ENCODE measurements at regions of chr1 and their contacts with region 1.

Region 1: DNA sequence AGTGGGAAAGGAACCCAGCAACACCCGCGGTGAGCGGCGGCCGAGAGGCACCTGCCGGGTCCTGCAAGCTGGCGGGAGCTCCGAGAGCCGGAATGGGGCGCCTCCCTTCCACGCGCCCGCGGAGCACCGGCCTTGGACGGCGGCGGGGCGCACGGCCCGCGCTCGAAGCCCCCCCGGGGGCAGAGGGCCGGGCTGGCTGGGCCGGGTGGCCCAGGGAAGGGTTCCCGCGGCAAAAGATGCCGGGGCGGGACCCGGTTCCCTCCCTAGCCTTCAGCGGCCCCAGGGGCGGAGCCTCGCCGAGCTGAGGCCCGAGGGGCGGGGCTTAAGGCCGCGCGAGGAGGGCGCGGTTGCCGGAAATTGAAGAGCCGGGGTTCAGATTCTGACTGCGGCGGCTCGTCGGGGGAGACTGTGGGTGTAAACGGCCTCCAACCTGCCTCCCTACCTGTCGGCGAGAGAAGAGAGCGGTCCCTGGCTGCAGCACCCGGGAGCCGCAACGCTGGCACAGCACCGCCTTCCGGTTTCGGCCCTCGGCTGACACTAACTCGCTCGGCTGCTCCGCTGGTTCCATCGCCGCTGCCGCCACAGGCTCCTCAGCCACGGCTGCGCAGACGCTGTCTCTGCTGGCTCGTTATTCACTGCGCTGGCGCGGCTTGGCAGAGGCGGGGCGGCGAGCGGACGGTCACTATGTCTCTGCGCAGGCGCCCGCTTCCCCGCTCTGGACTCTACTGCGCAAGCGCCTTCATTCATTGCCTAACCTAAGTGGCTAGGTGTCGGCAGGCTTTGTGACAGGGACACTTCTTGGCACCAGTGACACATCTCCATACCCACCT is at the start of gene RABIF:
- DNase-seq: peak; percentile 95
- H3K4me3 Mint-ChIP-seq: peak within 1 kb of the TSS; percentile 96
- H3K27ac Mint-ChIP-seq: peak within 1 kb of the TSS; percentile 98
- H3K4me1 Mint-ChIP-seq: peaks cover 25% of the 10 kb centered on the region
- H3K27me3 Mint-ChIP-seq: no peaks in the 10 kb centered on the region
- total RNA-seq, gene RABIF: 11.8 and 13.4 TPM in 2 replicates

Region 2: DNA sequence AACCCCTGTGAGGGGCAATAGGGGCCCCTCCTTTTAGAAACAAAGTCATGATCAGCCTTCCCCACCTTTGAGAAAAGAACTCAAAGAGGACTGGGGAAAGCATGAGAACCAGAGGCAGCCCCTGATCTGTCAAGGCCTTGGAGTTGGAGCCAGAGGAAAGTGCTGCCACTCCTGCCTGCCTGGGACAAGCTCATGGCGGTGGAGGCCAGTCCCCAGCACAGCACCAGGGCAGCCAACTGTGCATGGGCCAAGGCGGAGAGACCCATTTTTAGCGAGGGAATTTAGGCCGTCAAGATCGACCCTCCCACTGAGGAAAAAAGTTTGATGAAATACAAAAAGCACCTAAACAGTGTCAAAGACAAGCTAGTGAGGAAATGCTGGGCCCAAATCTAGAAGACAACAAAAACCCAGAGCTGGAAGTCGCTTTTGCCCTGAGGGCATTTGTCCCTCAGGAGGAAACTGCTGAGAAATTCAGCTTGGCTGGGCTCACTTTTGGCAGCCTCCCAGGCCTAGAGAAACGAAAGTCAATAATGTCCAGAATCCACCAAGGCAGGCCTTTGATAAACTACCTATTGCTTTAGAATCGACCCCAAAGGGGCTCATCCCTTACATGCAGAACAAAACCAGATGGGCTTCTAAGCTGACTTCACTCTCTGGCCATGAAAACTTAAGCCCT is 217.5 kb before region 1 on chr1:
- intact Hi-C with region 1: no loop called
- DNase-seq: no peak
- H3K4me3 Mint-ChIP-seq: no peak overlapping the region
- H3K27ac Mint-ChIP-seq: no peak overlapping the region
- H3K4me1 Mint-ChIP-seq: no peaks in the 10 kb centered on the region
- H3K27me3 Mint-ChIP-seq: peaks cover 8% of the 10 kb centered on the region

Region 3: DNA sequence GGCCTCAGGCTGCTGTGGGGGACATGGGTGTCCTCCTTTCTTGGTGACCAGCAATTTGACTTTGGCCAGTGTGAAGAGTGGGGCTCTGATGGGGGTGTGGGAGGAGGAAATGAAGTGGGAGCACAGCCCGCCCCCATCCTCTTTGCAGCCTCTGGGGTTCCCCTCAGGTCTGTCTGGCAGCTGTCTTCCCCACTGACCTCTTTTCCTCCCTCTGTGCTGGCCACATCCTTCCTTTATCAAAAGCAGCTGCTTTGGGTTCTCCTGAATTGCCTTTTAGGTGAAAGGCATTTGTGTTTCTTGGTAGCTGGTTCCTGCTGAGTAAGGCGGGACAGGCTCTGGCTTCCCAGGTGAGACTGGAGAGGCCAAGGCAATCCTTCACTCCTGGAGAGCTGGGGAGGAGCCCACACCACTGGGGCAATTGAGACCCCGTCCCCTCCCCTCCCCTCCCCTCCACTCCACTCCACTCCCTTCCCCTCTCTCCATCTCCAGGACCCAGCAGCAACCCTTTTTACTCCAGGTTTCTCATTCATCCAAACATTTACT is 53.1 kb before region 1 on chr1:
- intact Hi-C with region 1: loop called (anchors 2 kb)
- DNase-seq: peak; percentile 53
- H3K4me3 Mint-ChIP-seq: peak overlapping the region; percentile 63
- H3K27ac Mint-ChIP-seq: peak overlapping the region; percentile 82
- H3K4me1 Mint-ChIP-seq: peaks cover 71% of the 10 kb centered on the region
- H3K27me3 Mint-ChIP-seq: no peaks in the 10 kb centered on the region

Region 4: DNA sequence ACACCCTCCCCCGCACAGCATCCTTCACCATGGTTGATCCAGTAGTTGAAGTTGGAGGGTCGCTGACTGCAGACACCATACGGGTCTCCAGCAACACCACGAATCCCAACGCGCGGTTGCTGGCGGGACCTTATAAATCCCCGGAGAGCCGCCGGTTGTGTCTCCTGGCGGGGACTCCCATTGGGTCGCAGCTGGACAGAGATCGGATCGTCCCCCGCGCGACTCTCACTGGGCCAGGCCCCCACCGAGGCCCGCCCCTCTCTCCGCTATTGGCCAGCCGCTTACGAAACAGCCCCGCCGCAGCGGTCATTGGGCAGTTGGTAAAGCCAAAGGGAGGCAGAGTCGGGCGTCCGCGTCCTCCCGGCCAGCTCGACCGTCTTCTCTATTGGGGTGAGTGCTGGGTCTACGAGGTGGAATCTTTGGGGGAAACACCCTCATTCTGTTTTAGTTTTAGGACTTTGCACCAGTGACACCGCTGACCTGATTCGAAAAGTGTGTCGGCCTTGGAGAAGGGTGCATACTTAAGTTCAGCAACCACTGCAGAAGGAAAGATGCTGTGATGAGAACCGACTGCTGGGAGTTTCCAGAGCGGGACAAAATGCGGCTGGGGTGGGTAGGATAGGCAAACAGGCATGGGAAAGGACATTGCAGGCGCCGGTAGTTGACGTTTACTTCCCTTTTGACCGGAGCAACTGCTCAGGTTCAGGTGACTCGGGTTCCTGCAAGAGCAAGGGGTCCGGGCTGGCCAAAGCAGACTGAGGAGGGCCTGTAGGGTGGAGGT is 27.1 kb before region 1 on chr1:
- intact Hi-C with region 1: loop called (anchors 1 kb)
- DNase-seq: peak; percentile 60
- H3K4me3 Mint-ChIP-seq: peak overlapping the region; percentile 87
- H3K27ac Mint-ChIP-seq: no peak overlapping the region
- H3K4me1 Mint-ChIP-seq: peaks cover 21% of the 10 kb centered on the region
- H3K27me3 Mint-ChIP-seq: peaks cover 65% of the 10 kb centered on the region

Region 5: DNA sequence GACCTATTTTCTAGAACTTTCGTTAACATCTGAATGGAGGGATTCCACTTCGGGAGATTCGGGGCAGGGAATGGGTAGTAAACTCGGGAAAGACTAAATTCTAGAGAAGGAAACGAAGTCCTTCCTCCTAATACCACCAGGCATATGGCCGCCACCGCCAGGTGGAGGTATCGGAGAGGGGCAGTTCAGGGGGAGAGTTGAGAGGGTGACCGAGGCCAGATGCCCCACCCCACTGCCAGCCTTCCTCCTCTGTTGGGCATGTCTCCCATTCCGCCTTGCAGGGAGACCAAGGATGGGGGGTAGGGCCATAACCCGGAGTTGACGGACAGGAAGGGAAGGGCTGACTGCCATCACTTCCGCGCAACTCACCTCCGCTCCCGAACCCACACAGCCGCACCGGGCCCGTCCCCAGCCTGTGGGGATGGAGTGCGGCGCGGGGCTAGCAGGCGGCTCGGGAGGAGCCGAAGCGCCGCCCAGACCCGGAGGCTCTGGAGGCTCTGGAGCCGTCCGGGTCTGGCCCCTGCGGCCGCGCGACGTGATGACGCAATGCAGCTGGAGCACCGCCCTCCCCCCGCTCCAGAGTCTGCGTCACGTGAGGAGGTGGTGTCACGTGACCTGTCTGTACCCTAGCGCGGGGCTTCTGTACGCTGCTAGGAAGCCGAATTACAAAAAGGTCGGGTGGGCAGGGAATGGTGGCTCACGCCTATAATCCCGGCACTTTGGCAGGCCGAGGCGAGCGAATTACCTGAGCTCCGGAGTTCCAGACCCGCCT is 38.2 kb after region 1 on chr1 and contains the start of gene KLHL12:
- intact Hi-C with region 1: loop called (anchors 1 kb)
- DNase-seq: peak; percentile 92
- H3K4me3 Mint-ChIP-seq: peak within 1 kb of the TSS; percentile 97
- H3K27ac Mint-ChIP-seq: peak within 1 kb of the TSS; percentile 95
- H3K4me1 Mint-ChIP-seq: peaks cover 34% of the 10 kb centered on the region
- H3K27me3 Mint-ChIP-seq: peaks cover 3% of the 10 kb centered on the region
- total RNA-seq, gene KLHL12: 24.9 and 25.5 TPM in 2 replicates

Region 6: DNA sequence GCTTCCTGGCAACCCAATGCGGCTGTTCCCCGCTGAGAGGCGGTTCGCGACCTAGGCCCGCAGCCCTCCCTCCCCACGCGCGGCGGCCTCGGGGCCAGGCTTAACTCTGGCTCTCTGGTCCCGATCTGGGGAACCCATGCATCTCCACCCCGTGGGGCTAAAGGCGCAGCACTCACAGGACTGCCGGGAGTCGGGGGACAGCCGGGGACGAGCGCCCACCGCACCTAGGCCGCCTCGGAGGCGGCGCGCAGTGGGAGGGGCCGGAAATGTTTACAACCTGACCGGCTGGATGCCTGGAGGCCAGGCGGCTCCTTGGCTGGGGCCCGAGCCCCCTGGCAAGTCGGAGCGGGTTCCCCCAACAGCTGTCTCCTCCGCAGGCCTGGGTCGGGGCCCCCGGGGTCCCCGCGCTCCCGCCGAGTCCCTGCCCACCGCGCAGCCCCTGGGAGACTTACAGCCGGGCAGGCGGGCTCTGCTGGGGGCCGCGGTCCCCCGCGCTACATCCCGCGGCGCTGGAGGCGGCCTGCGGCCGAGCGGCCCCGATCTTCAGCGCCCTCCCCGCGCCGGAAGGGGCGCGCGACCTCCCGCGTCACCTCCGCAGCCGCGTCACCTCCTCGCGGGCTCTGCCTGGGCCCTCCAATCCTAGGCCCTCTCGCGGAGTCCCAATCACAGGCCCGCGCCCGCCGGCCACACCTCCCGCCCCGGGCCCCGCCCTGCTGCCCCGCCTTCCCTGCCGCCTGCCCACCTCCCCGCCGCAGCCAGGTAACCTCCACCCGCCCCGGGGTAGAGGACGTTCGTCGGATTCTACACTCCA is 69.2 kb after region 1 on chr1 and contains the start of gene ADIPOR1:
- intact Hi-C with region 1: loop called (anchors 1 kb)
- DNase-seq: peak; percentile 92
- H3K4me3 Mint-ChIP-seq: peak within 1 kb of the TSS; percentile 89
- H3K27ac Mint-ChIP-seq: peak within 1 kb of the TSS; percentile 80
- H3K4me1 Mint-ChIP-seq: peaks cover 46% of the 10 kb centered on the region
- H3K27me3 Mint-ChIP-seq: peaks cover 2% of the 10 kb centered on the region
- total RNA-seq, gene ADIPOR1: 88.7 and 93.3 TPM in 2 replicates

Region 7: DNA sequence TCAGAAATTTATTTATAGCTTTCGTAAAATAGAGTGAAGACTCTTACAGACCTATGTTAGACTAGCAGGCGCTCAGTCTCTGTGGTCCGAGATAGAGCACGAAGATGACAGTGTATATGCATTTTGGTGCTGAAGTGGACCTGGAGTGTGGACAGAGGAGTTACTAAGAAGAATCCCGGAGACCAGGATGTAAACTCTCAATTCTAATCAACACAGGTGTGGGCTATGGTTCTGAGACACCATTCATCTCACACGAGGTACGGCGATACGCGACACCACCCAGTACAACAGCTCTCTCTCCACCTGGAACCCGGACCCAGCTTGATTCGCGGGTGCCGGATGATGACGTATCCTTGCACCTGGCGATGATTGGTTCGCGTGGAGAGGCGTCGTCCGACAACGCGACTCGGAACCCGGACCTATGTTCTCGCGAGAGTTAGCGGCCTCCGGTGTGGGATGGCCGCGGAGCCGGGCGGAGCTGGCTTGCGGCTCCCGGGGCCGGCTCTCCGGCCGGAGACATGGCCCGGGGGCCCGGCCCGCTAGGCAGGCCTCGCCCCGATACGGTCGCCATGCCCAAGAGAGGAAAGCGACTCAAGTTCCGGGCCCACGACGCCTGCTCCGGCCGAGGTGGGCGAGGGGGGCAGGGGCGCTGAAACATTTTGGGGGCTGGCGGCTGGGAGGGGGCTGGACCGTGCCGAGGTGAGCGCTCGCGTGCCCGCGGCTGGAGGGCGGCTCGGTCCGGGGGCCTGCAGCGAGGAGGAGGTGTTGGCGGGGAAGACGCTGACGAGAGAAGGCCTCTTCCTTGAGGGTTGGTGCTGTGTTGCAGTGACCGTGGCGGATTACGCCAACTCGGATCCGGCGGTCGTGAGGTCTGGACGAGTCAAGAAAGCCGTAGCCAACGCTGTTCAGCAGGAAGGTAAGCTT is 118.5 kb after region 1 on chr1 and contains the start of gene TMEM183A:
- intact Hi-C with region 1: loop called (anchors 1 kb)
- DNase-seq: peak; percentile 95
- H3K4me3 Mint-ChIP-seq: peak within 1 kb of the TSS; percentile 89
- H3K27ac Mint-ChIP-seq: peak within 1 kb of the TSS; percentile 96
- H3K4me1 Mint-ChIP-seq: peaks cover 34% of the 10 kb centered on the region
- H3K27me3 Mint-ChIP-seq: no peaks in the 10 kb centered on the region
- total RNA-seq, gene TMEM183A: 69.9 and 83.6 TPM in 2 replicates

Region 8: DNA sequence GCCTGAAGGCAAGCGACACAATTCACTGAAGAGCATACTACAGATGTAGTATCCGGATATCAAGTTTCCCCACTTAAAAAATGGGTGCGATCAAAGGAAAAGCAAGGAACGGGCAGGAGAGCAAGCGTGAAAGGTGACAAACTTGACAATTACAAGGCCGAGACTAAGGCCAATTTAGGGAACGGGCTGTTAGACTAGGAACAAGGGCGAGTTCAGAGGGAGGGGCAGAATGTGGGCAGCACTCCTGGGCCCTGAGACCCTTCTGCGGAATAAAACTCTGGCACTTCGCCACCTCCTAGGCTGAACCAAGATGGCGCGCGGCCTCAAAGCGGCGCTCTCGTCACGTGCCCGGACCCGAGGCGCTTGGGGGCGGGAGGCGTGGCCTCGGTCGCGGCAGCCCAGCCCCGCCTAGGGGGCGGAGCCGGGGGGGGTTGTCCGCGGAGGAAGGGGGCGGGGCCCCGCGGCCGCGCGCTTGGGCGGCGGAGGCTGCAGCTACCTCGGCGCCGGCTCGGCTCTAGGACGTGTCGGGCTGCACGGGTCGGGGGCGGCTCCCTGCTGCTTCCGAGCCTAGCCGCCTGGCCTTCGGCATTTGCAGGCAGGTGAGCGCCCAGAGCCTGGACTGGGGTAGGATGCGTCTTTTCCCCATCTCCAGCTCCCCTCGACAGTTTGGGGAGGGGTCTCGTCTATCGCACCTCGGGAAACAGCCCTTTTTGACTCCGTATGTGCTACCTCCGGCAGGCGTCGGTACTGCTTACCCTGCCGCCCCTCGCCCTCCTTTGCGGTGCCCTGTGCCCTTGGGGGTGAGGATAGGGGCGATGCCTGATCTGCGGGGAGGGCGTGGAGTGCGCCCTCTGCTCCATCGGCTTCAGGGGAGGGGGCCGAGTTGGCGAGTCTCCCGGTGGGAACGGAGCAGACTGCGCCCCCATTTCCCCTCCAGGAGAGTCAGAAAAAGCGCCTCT is 137.6 kb after region 1 on chr1 and contains the start of gene PPFIA4:
- intact Hi-C with region 1: loop called (anchors 5 kb)
- DNase-seq: peak; percentile 87
- H3K4me3 Mint-ChIP-seq: peak within 1 kb of the TSS; percentile 85
- H3K27ac Mint-ChIP-seq: peak within 1 kb of the TSS; percentile 65
- H3K4me1 Mint-ChIP-seq: peaks cover 25% of the 10 kb centered on the region
- H3K27me3 Mint-ChIP-seq: no peaks in the 10 kb centered on the region
- total RNA-seq, gene PPFIA4: 11.5 and 14.9 TPM in 2 replicates